ENCODE measurements at regions of chr10 and their contacts with region 1.

Region 1: DNA sequence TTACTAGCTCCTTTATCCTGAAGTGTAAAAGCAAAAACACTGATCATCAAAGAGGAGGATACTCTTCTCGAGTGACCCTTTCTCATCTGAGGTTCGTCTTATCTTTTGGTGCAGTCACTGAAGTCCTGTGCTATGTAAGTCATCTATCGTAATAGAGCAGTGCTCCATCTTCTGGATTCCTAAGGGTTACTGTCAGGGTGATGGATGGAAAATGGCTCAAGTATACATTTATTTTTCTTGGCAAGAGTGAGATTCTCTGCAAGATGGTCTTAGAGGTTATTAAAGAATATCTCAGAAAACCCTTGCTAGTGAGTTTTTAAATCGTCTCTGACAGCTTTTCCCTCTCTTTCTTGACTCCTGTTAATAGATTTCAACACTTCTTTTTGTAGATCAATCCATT is 12.4 kb downstream of the PRKG1 start:
- DNase-seq: no peak
- H3K4me3 Mint-ChIP-seq: no peak overlapping the region
- H3K27ac Mint-ChIP-seq: no peak overlapping the region
- H3K4me1 Mint-ChIP-seq: no peaks in the 10 kb centered on the region
- H3K27me3 Mint-ChIP-seq: no peaks in the 10 kb centered on the region

Region 2: DNA sequence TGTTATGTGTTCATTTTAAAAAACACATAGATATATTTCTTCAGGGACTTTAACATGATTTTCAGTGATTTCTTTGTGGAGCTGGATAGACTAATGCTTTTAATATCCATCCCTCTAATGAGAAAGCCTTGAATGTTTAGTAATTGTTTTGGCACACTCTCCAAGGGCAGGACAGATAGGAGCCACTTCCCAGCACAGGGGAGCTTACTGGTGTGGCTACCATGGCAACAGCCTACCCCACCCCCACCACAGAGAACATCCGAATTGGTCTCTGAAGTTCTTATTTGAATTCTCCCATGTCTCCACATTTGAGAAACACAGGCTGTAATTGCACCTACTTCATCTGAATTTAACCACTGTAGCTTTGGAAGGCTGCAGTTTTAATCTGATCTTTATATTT is 75.3 kb after region 1 on chr10:
- intact Hi-C with region 1: no loop called
- DNase-seq: no peak
- H3K4me3 Mint-ChIP-seq: no peak overlapping the region
- H3K27ac Mint-ChIP-seq: no peak overlapping the region
- H3K4me1 Mint-ChIP-seq: no peaks in the 10 kb centered on the region
- H3K27me3 Mint-ChIP-seq: no peaks in the 10 kb centered on the region

Region 3: DNA sequence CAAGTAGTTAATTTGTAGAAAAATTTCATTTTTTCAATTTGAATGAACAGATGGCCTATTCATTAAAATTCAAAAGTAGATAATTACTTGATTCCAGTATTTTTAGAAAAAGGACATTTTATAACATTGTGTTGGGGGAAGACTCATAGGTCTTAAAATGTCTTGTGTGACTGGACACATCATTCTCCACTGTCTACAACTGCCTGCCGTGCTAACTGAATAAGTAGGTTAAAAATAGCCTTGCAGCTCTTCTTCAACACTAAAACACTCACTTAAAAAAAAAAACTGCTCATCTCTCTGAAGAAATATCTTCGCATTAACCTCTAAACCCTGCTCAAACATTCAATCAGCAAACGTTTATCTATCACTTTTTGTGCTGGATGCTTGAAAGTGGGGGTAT is 358.9 kb after region 1 on chr10:
- intact Hi-C with region 1: no loop called
- DNase-seq: no peak
- H3K4me3 Mint-ChIP-seq: no peak overlapping the region
- H3K27ac Mint-ChIP-seq: no peak overlapping the region
- H3K4me1 Mint-ChIP-seq: no peaks in the 10 kb centered on the region
- H3K27me3 Mint-ChIP-seq: no peaks in the 10 kb centered on the region

Region 4: DNA sequence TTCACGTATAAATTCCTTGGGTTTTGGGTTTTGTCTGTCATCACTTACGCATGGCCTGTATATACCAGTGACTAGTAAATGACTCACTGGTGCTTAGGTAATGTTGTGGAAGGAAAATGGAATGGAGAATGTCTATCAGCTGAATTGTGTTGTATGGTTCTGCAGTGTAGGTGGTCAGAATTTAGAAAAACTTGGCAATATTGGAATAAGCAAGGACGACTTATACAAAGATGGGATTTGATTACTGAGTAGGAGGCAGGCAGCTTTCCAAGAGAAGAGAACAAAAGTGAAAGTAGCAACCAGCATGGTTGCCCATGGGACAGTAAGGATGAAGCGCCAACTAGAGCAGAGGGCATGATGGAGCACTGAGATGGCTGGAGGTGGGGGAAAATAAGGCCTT is 781.2 kb after region 1 on chr10:
- intact Hi-C with region 1: loop called (anchors 5 kb)
- DNase-seq: no peak
- H3K4me3 Mint-ChIP-seq: no peak overlapping the region
- H3K27ac Mint-ChIP-seq: no peak overlapping the region
- H3K4me1 Mint-ChIP-seq: peaks cover 3% of the 10 kb centered on the region
- H3K27me3 Mint-ChIP-seq: peaks cover 7% of the 10 kb centered on the region

Measured in activated CD4-positive, alpha-beta T cell treated with anti-CD3 and anti-CD28 coated beads, Interleukin-2, amount 10 ng/mL, durations not matched to agents 24 days and 14 days (primary cell).